Naive thymus-derived CD4-positive, alpha-beta T cell (primary cell): ENCODE measurements at regions of chr1 and their contacts with region 1.

Region 1: DNA sequence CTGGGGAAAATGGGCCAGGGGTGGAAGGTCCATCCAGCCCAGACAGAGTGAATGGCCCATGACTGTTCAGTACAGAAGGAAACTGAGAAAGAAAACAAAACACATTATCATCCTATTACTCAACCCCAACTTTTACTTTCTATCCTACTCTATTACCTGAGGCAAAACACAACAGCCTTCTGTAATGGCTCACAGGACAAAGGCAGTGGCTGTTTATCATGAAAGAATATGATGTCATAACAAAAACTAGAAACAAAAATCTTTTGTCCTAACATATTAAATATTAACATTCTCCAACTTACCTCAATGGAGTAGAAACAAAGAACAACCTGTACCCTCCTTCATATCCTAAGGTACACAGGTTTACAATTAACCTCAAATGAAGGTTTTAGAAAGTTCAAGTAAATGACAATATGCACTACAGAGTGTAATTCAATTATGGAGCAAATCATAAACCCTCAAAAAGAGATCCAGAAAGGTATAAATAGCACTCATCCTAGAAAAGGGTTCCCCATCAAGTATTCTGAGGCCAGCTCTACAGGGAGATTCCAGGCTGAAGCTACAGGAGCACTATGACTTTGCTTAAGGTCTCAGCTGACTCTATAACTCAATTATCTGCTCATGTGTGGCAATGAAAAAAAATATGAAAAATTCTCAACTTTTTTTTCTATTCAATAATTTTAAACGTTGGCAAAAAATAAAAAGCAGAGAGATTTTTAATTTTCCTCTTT is 15.1 kb downstream of the ELK4 start:
- DNase-seq: no peak
- ATAC-seq: no peak
- H3K4me3 ChIP-seq: no peak overlapping the region
- H3K4me3 Mint-ChIP-seq: no peak overlapping the region
- H3K27ac ChIP-seq: no peak overlapping the region
- H3K27ac Mint-ChIP-seq: peak overlapping the region in 5 of 9 donors; percentile 8 to 59 (median 46)
- H3K4me1 ChIP-seq: peaks cover under 1 to 11% of the 10 kb centered on the region in 2 donors
- H3K4me1 Mint-ChIP-seq: peaks cover 12 to 66% (median 54%) of the 10 kb centered on the region in 7 donors
- H3K27me3 ChIP-seq: no peaks in the 10 kb centered on the region
- H3K27me3 Mint-ChIP-seq: no peaks in the 10 kb centered on the region

Region 2: GRCh38 chr1:205642679-205643307 is 26.1 kb after region 1 on chr1:
- CTCF ChIA-PET with region 1: no interaction called
- POLR2A ChIA-PET with region 1: no interaction called
- intact Hi-C with region 1: loop called in 1 of 2 experiments (anchors 1 kb)
- DNase-seq: no peak
- ATAC-seq: no peak
- H3K4me3 ChIP-seq: no peak overlapping the region
- H3K4me3 Mint-ChIP-seq: no peak overlapping the region
- H3K27ac ChIP-seq: no peak overlapping the region
- H3K27ac Mint-ChIP-seq: no peak overlapping the region
- H3K4me1 ChIP-seq: no peaks in the 10 kb centered on the region
- H3K4me1 Mint-ChIP-seq: no peaks in the 10 kb centered on the region
- H3K27me3 ChIP-seq: no peaks in the 10 kb centered on the region
- H3K27me3 Mint-ChIP-seq: peaks cover 0 to 31% (median 0%) of the 10 kb centered on the region in 5 donors

Region 3: GRCh38 chr1:205658943-205659581 is 42.3 kb after region 1 on chr1:
- CTCF ChIA-PET with region 1: no interaction called
- POLR2A ChIA-PET with region 1: no interaction called
- intact Hi-C with region 1: no loop called
- DNase-seq: peak; percentile 39 to 76 (median 65)
- ATAC-seq: peak; percentile 91
- H3K4me3 ChIP-seq: no peak overlapping the region
- H3K4me3 Mint-ChIP-seq: no peak overlapping the region
- H3K27ac ChIP-seq: no peak overlapping the region
- H3K27ac Mint-ChIP-seq: peak overlapping the region in 1 of 9 donors; percentile 50
- H3K4me1 ChIP-seq: no peaks in the 10 kb centered on the region
- H3K4me1 Mint-ChIP-seq: peaks cover 0 to 9% (median 0%) of the 10 kb centered on the region in 7 donors
- H3K27me3 ChIP-seq: no peaks in the 10 kb centered on the region
- H3K27me3 Mint-ChIP-seq: peaks cover 0 to 5% (median 0%) of the 10 kb centered on the region in 5 donors